ENCODE measurements at regions of chr9 and their contacts with region 1.

Region 1: DNA sequence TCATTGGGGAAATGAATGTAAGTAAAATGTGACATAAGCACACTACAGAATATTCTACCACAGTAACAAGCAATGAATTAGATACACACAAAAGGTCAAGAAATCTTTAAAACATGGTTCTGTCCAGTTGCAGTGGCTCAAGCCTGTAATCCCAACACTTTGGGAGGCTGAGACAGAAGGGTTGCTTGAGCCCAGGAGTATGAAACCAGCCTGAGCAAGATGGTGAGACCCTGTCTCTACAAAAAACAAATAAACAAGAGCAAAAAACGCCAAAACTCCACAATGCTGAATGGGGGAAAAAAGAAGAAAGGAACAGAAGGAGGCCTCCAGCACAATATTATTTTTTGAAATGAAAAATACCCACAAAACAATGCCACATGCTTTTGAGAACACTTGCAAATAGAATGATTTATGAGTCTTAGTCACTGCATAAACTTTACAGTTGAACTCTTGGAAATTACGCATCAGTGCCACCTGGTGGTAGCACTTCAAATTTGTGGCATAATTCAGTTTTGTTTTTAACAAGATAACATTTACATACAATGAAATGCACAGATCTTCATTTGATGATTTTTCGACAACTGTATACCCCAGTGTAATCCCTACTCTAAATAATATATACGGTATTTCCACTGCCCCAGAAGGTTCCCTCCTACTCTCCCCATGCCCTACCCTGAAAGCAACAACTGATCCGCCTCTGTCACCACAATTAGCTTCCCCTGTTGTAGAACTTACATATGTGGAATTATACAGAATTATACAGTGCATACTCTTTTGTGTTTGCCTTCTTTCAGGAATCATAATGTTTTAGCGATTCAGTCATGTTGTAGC is 14.4 kb upstream of the SPINK4 start:
- DNase-seq: no peak
- CTCF ChIP-seq: peak; percentile 57

Region 2: DNA sequence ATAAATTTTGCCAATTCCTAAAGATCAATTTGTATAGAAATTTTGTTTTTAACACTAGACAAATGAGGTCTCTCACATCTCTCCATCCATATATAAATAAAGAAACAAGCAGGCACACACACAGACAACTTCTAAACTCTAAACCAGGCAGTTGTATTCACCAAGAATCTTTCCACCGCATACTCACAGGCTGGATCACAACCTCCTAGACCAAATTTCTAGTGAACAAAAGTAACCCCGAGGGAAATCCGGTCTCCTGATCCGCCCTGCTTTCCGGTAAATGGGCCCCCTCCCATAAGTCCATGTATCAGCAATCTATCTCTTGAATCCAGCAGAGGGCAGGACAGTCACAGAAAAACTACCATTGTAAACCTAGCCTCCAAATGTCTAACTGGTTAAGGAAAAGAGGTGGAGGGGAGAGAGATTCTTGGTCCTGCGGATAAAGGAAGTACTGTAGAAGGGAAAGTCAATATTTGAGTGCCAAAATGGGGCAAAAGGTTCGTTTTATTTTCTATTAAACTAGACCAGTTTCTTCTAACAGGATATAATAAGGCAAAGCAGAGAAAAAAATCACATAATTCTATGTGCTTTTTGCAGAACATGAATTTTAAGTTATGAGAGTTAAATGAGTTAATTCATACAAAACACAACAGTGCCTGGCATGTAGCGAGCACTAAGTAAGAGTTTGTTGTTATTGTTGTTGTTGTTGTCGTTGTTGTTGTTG is 144.2 kb before region 1 on chr9:
- in situ Hi-C with region 1: loop called (anchors 5 kb)
- DNase-seq: peak; percentile 78
- CTCF ChIP-seq: peak; percentile 73

Region 3: GRCh38 chr9:33167046-33167808 is 58.3 kb before region 1 on chr9 and contains the start of gene B4GALT1:
- in situ Hi-C with region 1: loop called (anchors 10 kb)
- DNase-seq: peak; percentile 97
- CTCF ChIP-seq: peak; percentile 23

Region 4: GRCh38 chr9:33860200-33860871 is 634.8 kb after region 1 on chr9:
- in situ Hi-C with region 1: no loop called
- DNase-seq: no peak
- CTCF ChIP-seq: no peak